ENCODE measurements at regions of chr1 and their contacts with region 1.

Region 1: DNA sequence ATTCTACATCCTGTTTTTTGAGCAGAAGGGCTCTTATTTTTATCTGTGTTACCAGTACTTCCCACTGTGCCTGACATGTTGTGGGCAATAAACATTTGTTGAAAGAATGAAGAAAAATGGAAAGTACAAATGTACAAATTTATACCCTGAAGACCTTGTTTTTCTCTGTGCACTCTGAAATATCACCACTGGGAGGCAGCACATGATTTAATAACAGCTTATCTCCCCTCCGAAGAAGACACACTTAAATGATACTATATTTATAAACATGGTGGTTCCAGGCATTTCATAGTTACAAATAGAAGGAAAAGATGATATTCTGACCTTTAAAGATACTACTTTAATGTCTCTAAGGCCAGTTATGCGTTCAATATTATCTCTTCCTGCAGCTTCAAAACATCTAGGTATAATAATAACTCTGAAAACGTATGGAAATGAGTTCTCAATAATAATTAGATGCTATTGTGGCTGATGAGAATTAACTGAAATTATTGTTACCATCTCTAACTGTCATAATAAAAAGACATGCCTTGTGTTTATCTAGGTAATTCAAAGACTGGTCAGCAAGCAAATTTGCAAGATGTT is 12.8 kb downstream of the DYNLT5 start:
- DNase-seq: no peak
- ATAC-seq: no peak
- H3K4me3 ChIP-seq: no peak overlapping the region
- H3K27ac ChIP-seq: no peak overlapping the region
- H3K4me1 ChIP-seq: no peaks in the 10 kb centered on the region
- H3K27me3 ChIP-seq: no peaks in the 10 kb centered on the region

Region 2: DNA sequence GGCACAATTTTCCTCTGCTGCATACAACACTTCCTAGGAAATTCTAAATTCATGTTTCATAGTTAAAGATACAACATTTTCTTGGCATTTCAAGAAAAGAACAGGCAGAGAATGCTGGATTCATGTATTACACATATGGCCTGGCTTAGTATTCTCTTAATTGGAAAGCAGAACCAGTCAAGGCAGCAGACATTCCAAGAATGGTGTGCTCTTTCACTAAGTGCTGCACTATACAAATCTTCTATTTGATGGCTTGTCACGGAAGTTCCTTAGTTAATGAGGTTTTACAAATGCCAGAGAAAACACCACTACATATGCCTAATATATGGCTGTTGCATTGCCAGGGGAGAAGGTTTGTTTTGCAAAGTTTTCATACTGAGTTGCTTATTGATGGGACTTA is 93.6 kb before region 1 on chr1:
- intact Hi-C with region 1: no loop called
- DNase-seq: no peak
- ATAC-seq: no peak
- H3K4me3 ChIP-seq: no peak overlapping the region
- H3K27ac ChIP-seq: no peak overlapping the region
- H3K4me1 ChIP-seq: peaks cover 0 to 5% of the 10 kb centered on the region in 2 donors
- H3K27me3 ChIP-seq: no peaks in the 10 kb centered on the region

Region 3: GRCh38 chr1:66996018-66996682 is 231.1 kb after region 1 on chr1:
- intact Hi-C with region 1: loop called in 1 of 2 experiments (anchors 10 kb)
- DNase-seq: peak in 1 of 2 donors; percentile 57
- ATAC-seq: peak; percentile 85
- H3K4me3 ChIP-seq: no peak overlapping the region
- H3K27ac ChIP-seq: no peak overlapping the region
- H3K4me1 ChIP-seq: peaks cover 0 to 3% of the 10 kb centered on the region in 2 donors
- H3K27me3 ChIP-seq: no peaks in the 10 kb centered on the region

Region 4: DNA sequence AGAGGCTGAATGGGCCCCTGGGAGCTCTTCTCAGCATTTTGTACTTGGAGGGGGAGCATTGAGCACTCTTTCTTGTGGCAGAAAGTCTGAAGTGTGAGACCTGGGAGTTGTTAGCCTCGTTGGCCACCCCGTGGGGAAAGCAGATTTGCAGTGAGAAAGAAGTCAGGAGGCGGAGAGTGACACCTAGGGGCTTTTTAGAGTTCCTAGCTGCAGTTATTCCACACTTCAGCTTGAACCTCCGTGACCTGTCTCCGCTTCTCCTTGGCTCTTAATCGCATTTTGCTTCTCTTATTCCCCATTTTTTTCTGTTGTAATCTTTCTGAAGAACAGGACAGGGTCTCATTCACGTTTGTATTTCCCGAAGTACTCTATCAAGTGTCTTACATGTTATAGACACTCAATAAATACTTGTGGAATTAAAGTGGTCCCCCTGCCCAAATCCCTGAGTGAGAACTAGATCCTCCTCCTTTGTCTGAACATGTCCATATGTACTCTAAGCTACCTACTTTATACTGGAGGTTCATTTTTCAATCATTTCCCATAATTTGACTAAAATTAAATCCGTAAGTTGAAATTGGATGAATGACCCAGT is 384.2 kb after region 1 on chr1:
- intact Hi-C with region 1: loop called (anchors 5 to 10 kb)
- DNase-seq: peak in 1 of 2 donors; percentile 68
- ATAC-seq: peak; percentile 88
- H3K4me3 ChIP-seq: no peak overlapping the region
- H3K27ac ChIP-seq: no peak overlapping the region
- H3K4me1 ChIP-seq: no peaks in the 10 kb centered on the region
- H3K27me3 ChIP-seq: no peaks in the 10 kb centered on the region

Region 5: DNA sequence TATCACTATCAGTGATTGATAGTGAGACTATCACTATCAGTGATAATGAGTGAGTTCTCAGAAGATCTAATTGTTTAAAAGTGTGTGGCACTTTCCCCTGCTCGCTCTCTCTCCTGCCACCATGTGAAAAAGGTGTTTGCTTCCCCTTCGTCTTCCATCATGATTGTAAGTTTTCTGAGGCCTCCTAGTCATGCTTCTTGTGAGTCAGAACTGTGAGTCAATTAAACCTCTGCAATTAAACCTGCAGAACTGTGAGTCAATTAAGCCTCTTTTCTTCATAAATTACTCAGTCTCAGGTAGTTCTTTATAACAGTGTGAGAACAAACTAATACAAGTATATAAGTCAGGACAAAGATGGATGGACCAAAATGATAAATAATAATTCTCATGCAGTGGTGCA is 394.1 kb after region 1 on chr1:
- intact Hi-C with region 1: loop called in 1 of 2 experiments (anchors 10 kb)
- DNase-seq: no peak
- ATAC-seq: no peak
- H3K4me3 ChIP-seq: no peak overlapping the region
- H3K27ac ChIP-seq: no peak overlapping the region
- H3K4me1 ChIP-seq: no peaks in the 10 kb centered on the region
- H3K27me3 ChIP-seq: no peaks in the 10 kb centered on the region